ENCODE measurements at regions of chr15 and their contacts with region 1.

Region 1: DNA sequence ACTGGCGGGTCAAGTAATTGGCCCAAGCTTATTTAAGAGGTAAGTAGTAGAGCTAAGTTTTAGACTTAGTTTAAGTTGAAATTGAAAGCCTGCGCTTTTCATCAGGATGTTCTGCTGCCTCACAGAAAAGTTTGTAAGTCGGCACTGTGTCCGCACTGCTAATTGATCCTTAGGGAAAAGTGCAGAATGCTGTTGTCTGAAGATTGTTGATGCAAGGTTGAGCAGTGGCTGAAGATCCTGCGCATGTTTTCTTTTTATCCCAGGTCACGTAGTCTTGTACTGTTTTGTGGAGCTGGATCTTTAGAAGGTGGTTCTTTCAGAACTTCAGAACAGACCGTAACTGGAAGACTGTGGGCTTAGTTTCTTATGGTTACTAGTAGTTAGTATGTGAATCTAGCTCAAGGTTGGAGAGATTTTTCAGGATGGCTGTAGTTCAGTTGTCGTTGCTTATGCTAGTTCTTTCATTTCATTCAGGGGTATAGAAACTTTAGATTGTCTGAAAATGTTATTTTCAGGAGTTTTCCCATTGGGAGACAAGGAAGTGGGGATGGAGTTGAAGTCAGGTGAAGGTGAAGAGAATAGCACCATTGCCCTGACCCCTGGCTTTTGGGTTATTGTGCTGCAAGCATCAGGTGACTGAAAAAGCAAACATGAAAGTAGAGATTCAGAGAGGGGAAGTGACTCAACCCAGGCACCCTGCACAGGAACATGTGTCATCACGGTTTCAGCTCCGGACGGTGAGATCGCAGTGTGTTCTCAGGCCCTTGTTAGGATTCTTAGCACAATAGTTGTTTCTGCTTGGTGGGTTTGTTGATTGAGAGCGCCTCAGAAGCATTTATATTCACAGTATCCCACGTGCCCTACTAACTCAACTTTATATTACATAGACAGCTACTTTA is 32.8 kb downstream of the AKAP13 start:
- DNase-seq: peak; percentile 86
- CTCF ChIP-seq: peak; percentile 10

Region 2: DNA sequence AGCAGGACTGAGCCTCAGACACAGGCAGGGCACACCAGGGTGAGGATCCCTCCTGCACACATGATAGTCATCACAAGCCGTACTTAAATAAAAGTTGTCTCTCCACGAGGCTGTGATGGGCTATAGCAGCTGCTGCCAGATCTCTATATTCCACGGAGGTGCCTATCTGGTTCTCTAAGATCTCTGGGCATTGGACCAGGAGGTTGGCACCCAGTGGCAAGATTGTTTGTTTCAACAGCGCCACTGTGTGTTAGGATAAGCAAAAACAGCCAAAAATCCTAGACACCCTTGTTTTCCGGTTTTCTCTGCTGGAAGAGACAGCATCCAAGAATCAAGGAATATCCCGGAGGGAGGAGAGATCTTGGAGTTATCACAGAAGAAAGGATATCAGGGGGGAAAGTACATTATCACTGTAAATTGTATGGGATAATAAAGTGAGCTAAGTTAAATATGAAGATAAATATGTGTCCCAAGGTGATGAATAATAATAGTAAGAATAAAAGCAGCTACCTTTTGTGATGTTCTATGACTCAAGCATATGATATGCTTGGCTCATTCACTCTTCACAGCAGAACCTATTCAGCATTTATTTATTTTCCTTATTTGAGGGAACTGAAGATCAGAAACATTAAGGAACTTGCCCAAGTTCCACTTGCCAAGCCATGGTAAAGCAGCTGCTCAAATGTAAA is 123.4 kb before region 1 on chr15:
- CTCF ChIA-PET with region 1: interaction called, 70 read pairs
- POLR2A ChIA-PET with region 1: no interaction called
- DNase-seq: peak; percentile 41
- CTCF ChIP-seq: peak; percentile 45

Region 3: DNA sequence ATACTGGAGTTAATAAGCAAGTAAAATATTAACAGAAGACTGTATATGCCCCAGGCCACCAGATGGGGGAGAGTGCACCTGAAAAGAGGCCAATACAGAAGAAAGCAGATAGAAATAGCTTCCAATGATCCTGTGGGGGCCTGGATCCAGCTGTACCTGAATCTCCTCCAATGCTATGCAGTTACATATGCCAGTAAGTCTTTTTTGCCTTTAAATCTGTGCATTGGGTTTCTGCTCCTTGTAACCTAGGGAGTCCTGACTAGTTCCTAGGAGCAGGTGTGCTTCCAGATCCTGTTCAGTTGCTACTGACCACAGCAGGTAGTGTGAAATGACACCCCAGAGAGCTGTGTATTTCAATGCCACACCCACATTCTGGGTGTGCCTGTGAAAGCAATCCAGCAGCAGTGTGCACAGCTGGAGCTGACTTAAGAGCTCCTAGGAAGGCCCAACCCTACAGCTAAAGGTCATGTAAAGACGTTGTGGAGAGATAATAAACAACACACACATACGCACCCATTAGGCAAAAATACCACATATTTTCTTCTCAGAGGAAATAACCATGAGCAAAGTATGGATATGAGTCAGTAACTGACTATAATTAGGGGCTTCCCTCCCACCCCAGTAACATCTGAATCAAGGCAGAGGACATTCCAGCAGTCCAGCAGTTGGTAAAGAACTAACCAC is 95.0 kb before region 1 on chr15:
- CTCF ChIA-PET with region 1: interaction called, 11 read pairs
- POLR2A ChIA-PET with region 1: no interaction called
- DNase-seq: peak; percentile 68
- CTCF ChIP-seq: peak; percentile 19

Region 4: GRCh38 chr15:85330901-85331588 is 82.2 kb before region 1 on chr15:
- CTCF ChIA-PET with region 1: interaction called, 30 read pairs
- POLR2A ChIA-PET with region 1: no interaction called
- DNase-seq: peak; percentile 77
- CTCF ChIP-seq: peak; percentile 94

Region 5: DNA sequence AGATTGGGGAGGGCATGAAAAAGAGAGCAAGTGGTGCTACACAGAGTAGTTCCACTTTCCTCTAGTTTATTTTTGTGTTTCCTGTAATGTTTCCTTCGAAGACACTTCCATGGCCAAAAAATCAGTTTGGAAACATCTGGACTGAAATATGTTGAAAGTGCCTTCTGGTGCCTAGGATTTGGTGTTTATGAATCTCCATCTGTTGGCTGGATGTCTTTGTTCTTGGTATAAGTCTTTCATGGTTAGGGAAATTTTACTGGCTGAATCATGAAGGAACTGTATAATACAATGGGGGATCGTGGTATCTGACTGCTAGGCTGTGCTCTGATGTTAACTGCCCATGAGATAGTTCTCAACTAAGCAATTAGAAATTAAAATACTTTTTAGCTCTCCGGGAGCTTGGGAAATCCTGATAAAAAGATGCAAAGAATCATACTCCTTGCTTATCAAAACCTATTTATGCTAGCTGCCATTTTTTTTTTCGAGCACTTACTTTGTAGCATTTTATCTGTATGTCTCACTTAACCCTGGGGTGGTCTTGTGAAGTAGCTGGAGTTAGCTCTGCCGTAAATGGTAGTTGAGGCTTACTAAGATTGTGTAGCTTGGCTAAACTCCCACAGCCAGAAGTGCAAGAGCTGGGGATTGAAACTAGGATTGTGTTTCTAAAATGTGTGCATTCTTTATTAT is 10.9 kb before region 1 on chr15:
- CTCF ChIA-PET with region 1: interaction called, 80 read pairs
- POLR2A ChIA-PET with region 1: interaction called, 4 read pairs
- DNase-seq: no peak
- CTCF ChIP-seq: no peak

Region 6: DNA sequence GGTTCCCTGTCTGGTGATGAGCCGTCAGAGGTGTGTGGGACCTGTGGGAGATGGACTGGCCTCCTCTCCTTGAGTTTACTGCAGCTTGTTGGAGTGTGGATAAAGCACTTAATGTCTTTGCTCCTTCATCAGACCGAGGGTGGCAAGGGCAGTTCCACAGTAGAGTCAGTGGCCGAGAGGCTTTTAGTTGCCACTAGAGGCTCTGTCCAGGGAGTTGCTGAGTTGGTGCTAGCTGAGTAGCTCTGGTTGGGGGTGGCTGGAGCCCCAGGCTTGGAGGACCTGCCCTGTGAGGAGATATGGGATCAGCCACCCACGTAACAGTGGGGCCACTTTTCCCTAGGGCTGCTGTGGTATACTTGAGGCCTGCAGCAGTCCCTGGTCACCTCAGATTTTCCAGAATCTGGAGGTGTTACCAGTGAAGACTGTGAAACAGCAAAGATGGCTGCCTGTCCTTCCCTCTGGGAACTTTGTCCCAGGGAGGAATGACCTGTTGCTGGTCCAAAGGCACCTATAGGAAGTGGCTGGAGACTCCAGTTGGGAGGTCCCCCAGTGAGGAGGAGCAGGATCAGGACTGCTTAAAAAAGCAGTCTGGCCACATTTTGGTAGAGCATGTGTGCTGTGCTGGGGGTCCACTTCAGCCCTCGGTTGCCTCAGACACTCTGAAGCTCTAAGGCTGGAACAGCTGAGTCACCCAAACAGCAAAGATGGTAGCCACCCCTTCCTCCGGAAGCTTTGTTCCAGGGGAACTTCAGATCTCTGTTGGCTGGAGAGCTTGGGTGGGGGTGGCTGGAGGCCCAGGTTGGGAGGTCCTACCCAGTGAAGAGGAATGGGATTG is 40.0 kb after region 1 on chr15:
- CTCF ChIA-PET with region 1: interaction called, 12 read pairs
- POLR2A ChIA-PET with region 1: no interaction called
- DNase-seq: no peak
- CTCF ChIP-seq: no peak

Region 7: DNA sequence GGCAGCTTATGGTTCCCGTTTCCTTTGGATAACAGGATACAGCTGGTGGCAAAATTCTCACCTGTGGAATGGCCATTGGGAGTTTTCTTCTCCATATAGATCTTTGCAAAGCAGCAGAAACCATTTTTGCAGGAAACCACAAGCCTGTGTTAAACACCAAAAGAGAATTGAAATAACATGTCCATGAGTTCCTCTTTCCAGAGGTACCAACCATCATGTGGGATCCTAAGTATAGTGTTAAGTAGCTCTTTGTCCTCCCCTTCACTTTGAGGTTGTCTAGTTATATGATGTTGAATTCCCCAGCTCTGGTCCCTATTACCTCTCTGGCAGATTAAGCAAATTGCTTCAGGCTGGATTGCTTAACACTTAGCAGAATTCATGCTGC is 62.1 kb after region 1 on chr15:
- CTCF ChIA-PET with region 1: interaction called, 14 read pairs
- POLR2A ChIA-PET with region 1: no interaction called
- DNase-seq: peak; percentile 31
- CTCF ChIP-seq: no peak

Measured in GM10248 (cell line).